ENCODE measurements at regions of chr15 and their contacts with region 1.

Region 1: DNA sequence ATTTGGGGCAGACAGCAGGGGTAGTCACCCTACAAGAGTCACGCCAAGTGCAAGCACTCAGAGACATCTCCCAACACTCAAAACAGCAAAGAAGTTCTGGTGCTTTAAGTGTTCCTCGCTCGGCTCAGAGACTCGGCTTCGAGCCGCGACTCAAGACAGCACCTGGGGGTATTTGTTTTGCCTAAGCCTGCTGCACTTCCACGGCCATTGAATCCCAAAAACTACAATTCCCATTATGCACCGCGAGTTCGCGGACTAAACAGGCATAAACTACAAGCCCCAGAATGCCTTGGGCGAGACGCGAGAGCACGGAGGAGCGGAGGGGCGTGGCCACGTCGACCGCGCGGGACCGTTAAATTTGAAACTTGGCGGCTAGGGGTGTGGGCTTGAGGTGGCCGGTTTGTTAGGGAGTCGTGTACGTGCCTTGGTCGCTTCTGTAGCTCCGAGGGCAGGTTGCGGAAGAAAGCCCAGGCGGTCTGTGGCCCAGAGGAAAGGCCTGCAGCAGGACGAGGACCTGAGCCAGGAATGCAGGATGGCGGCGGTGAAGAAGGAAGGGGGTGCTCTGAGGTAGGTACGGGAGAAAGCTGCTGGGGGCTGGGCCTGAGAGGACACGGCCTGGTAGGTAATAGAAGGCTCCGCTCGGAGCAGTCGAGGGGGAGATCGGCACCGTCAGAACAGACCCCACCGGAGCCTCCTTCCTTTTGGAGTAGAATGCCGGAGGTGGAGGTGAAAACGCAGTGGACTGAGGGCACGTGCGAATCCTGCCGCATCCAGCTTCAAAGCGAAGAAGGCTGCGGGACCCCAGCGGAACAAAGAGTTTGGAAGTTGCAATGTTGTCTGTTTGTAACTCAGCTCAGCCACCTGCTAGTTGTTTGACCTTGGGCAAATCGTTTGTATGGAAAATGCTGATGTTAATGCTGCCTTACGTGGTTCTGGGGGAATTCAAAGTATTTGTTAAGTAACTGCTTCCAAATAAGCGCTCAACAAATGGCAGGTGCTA is at the start of gene BUB1B:
- DNase-seq: peak; percentile 88
- ATAC-seq: peak; percentile 88
- H3K4me3 ChIP-seq: peak within 1 kb of the TSS; percentile 91
- H3K27ac ChIP-seq: peak within 1 kb of the TSS; percentile 64
- H3K4me1 ChIP-seq: peaks cover 13% of the 10 kb centered on the region
- H3K27me3 ChIP-seq: no peaks in the 10 kb centered on the region
- CTCF ChIP-seq: no peak
- EP300 ChIP-seq: 0 out of 4 replicates have a peak, but pooled peaks of 1 of the 2 experiments have one; percentile 17
- POLR2A ChIP-seq: peak; percentile 92
- RAD21 ChIP-seq: no peak
- polyA plus RNA-seq, gene BUB1B: 29.1 to 38.6 TPM

Region 2: GRCh38 chr15:40115670-40116093 is 45.3 kb before region 1 on chr15:
- CTCF ChIA-PET with region 1: interaction called, 6 read pairs
- POLR2A ChIA-PET with region 1: interaction called, 4 read pairs
- RAD21 ChIA-PET with region 1: interaction called, 32 read pairs
- SMC1A ChIA-PET with region 1: interaction called, 227 read pairs
- in situ Hi-C with region 1: no loop called
- intact Hi-C with region 1: no loop called
- DNase-seq: peak; percentile 83
- ATAC-seq: peak; percentile 97
- H3K4me3 ChIP-seq: no peak overlapping the region
- H3K27ac ChIP-seq: peak overlapping the region; percentile 69
- H3K4me1 ChIP-seq: peaks cover 30% of the 10 kb centered on the region
- H3K27me3 ChIP-seq: no peaks in the 10 kb centered on the region
- CTCF ChIP-seq: no peak
- EP300 ChIP-seq: peak; percentile 40 to 77; a peak in 3 of 4 replicates
- POLR2A ChIP-seq: peak; percentile 62
- RAD21 ChIP-seq: no peak

Region 3: GRCh38 chr15:40175160-40175559 is 14.2 kb after region 1 on chr15:
- CTCF ChIA-PET with region 1: interaction called, 21 read pairs
- POLR2A ChIA-PET with region 1: interaction called, 5 read pairs
- RAD21 ChIA-PET with region 1: interaction called, 4 read pairs
- SMC1A ChIA-PET with region 1: interaction called, 7 read pairs
- in situ Hi-C with region 1: no loop called
- intact Hi-C with region 1: no loop called
- DNase-seq: no peak
- ATAC-seq: no peak
- H3K4me3 ChIP-seq: no peak overlapping the region
- H3K27ac ChIP-seq: no peak overlapping the region
- H3K4me1 ChIP-seq: no peaks in the 10 kb centered on the region
- H3K27me3 ChIP-seq: no peaks in the 10 kb centered on the region
- CTCF ChIP-seq: no peak
- EP300 ChIP-seq: no peak
- POLR2A ChIP-seq: no peak
- RAD21 ChIP-seq: no peak

Region 4: GRCh38 chr15:40182358-40183029 is 21.5 kb after region 1 on chr15:
- CTCF ChIA-PET with region 1: interaction called, 11 read pairs
- POLR2A ChIA-PET with region 1: interaction called, 5 read pairs
- RAD21 ChIA-PET with region 1: interaction called, 11 read pairs
- SMC1A ChIA-PET with region 1: interaction called, 11 read pairs
- in situ Hi-C with region 1: no loop called
- intact Hi-C with region 1: no loop called
- DNase-seq: no peak
- ATAC-seq: peak; percentile 73
- H3K4me3 ChIP-seq: no peak overlapping the region; the same call in 1 of the 2 replicates
- H3K27ac ChIP-seq: peak overlapping the region; percentile 39
- H3K4me1 ChIP-seq: peaks cover 19% of the 10 kb centered on the region
- H3K27me3 ChIP-seq: no peaks in the 10 kb centered on the region
- CTCF ChIP-seq: no peak
- EP300 ChIP-seq: no peak
- POLR2A ChIP-seq: no peak
- RAD21 ChIP-seq: no peak